ENCODE measurements at regions of chr19 and their contacts with region 1.

Region 1: GRCh38 chr19:42028304-42029216 is 34.5 kb upstream of the ATP1A3 start:
- DNase-seq: peak; percentile 52
- H3K4me3 Mint-ChIP-seq: no peak overlapping the region
- H3K27ac Mint-ChIP-seq: no peak overlapping the region
- H3K4me1 Mint-ChIP-seq: no peaks in the 10 kb centered on the region
- H3K27me3 Mint-ChIP-seq: peaks cover 41% of the 10 kb centered on the region

Region 2: DNA sequence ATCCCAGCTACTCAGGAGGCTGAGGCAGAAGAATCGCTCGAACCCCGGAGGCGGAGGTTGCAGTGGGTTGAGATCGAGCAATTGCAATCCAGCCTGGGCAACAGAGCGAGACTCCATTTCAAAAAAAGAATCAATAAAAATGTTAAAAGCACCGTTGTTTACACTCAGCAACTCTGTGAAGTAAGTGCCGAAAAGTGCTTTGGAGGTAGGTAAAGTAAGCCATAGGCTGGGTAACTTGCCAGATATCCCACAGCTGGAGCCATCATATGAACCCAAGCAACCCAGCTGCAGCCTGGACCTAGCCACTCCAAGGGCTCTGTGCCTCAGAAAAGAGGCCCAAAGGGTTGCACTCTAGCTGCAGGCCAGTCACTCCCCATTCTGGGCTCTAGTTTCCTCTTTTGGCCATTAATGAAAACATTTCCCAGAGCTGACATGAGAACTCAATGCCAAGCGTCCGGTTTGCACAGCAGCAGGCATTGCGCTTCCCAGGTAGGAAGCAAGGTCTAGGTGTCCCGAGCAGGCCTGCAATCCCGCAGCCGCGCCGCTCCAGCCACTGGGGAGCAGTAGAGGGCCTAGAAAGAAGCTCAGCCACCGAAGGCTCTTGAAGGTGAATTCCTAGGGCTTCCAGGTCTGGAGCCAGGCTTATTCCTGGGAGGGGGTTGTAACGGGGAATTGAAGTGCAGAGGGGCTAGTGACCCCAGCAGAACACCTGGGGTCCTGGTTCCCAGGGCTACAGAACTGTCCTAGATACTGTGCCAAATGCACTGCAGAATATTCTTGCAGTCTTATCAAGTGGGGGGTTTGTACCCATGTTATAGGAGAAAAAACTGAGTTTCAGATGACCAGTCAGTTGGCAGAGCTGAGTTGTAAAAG is 155.5 kb before region 1 on chr19:
- CTCF ChIA-PET with region 1: no interaction called
- DNase-seq: peak; percentile 80
- H3K4me3 Mint-ChIP-seq: no peak overlapping the region
- H3K27ac Mint-ChIP-seq: peak overlapping the region; percentile 99
- H3K4me1 Mint-ChIP-seq: peaks cover 98% of the 10 kb centered on the region
- H3K27me3 Mint-ChIP-seq: no peaks in the 10 kb centered on the region

Region 3: GRCh38 chr19:41904118-41904870 is 124.3 kb before region 1 on chr19:
- CTCF ChIA-PET with region 1: no interaction called
- DNase-seq: no peak
- H3K4me3 Mint-ChIP-seq: no peak overlapping the region
- H3K27ac Mint-ChIP-seq: no peak overlapping the region
- H3K4me1 Mint-ChIP-seq: peaks cover 26% of the 10 kb centered on the region
- H3K27me3 Mint-ChIP-seq: no peaks in the 10 kb centered on the region

Region 4: DNA sequence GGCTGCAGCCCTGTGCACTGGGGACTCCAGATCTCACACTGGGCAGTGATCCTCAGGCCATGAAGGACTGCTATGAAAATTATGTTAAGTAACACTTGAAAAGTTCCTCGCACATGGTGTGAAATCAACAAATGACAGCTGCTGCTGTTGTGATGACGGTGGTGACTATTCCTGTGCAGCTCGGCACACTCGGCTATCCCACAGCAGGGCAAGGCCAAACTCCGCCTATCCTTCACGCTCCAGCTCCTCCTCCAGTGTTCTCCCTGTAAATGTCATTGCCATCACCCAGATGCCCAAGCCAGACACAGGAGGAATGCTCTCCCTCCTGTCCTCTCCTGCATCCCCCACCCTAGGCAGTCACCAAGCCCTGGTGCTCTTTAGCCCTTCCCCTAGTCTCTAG is 10.1 kb after region 1 on chr19:
- CTCF ChIA-PET with region 1: interaction called, 11 read pairs
- DNase-seq: no peak
- H3K4me3 Mint-ChIP-seq: no peak overlapping the region
- H3K27ac Mint-ChIP-seq: no peak overlapping the region
- H3K4me1 Mint-ChIP-seq: peaks cover 6% of the 10 kb centered on the region
- H3K27me3 Mint-ChIP-seq: peaks cover 18% of the 10 kb centered on the region

Region 5: DNA sequence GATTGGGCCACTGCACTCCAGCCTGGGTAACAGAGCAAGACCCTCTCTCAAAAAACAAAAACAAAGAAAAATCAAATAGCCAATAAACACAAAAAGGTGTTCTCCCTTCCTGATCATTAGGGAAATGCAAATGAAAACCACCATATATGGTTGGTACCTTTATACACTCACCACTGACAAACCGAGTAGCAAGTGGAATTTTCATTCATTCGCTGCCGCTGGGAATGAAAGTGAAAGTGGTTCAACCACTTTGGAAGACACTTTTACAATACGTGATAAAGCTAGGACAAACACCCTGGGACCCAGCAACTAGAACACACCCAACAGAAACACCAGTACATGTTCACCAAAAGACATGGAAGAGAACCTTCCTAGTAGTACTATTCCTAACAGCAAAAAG is 20.4 kb after region 1 on chr19:
- CTCF ChIA-PET with region 1: interaction called, 12 read pairs
- DNase-seq: peak; percentile 43
- H3K4me3 Mint-ChIP-seq: peak overlapping the region; percentile 19
- H3K27ac Mint-ChIP-seq: peak overlapping the region; percentile 77
- H3K4me1 Mint-ChIP-seq: peaks cover 8% of the 10 kb centered on the region
- H3K27me3 Mint-ChIP-seq: peaks cover 11% of the 10 kb centered on the region

Measured in activated naive CD4-positive, alpha-beta T cell treated with anti-CD3 and anti-CD28 coated beads, Interleukin-2, amount 10 ng/mL, durations not matched to agents 7 days and 5 days (primary cell).